ENCODE measurements at regions of chr20 and their contacts with region 1.

Region 1: GRCh38 chr20:14717134-14717999 is 380.0 kb upstream of the FLRT3 start:
- DNase-seq: no peak
- H3K4me3 ChIP-seq: no peak overlapping the region
- H3K27ac ChIP-seq: no peak overlapping the region
- H3K4me1 ChIP-seq: peaks cover 8% of the 10 kb centered on the region
- H3K27me3 ChIP-seq: no peaks in the 10 kb centered on the region
- CTCF ChIP-seq: no peak
- POLR2A ChIP-seq: no peak

Region 2: GRCh38 chr20:14688005-14688404 is 29.4 kb before region 1 on chr20:
- intact Hi-C with region 1: loop called (anchors 2 kb)
- DNase-seq: no peak
- H3K4me3 ChIP-seq: no peak overlapping the region
- H3K27ac ChIP-seq: no peak overlapping the region
- H3K4me1 ChIP-seq: no peaks in the 10 kb centered on the region
- H3K27me3 ChIP-seq: no peaks in the 10 kb centered on the region
- CTCF ChIP-seq: no peak
- POLR2A ChIP-seq: no peak

Region 3: GRCh38 chr20:14775518-14776203 is 58.3 kb after region 1 on chr20:
- intact Hi-C with region 1: no loop called
- DNase-seq: no peak
- H3K4me3 ChIP-seq: no peak overlapping the region
- H3K27ac ChIP-seq: no peak overlapping the region
- H3K4me1 ChIP-seq: peaks cover 8% of the 10 kb centered on the region
- H3K27me3 ChIP-seq: no peaks in the 10 kb centered on the region
- CTCF ChIP-seq: no peak
- POLR2A ChIP-seq: no peak

Region 4: DNA sequence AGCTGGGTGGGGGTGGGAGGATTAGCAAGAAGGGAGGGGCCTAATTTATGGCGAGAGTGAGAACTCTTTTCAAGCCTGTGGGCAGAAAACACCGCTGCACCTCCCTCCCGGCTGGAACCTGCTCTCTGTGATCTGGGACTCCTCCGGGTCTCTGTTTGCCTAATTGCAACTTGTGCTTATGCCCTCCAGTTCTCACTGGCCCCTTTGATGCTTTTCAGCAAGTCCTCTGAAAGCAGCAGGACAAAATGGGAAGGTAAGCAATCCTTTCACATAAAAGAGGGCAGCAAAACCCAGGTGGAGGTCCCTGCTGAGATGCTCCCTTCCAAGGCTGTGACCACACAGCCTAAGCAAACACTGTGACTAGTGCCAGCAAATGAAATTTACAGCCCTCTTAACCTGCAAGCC is 143.0 kb after region 1 on chr20:
- intact Hi-C with region 1: no loop called
- DNase-seq: no peak
- H3K4me3 ChIP-seq: no peak overlapping the region
- H3K27ac ChIP-seq: no peak overlapping the region
- H3K4me1 ChIP-seq: no peaks in the 10 kb centered on the region
- H3K27me3 ChIP-seq: no peaks in the 10 kb centered on the region
- CTCF ChIP-seq: no peak
- POLR2A ChIP-seq: no peak

Measured in vagina (tissue), 2 donors.